Activated CD4-positive, alpha-beta T cell treated with anti-CD3 and anti-CD28 coated beads, Interleukin-2, amount 10 ng/mL, durations not matched to agents 24 days and 14 days (primary cell): ENCODE measurements at regions of chr1 and their contacts with region 1.

Region 1: GRCh38 chr1:160519642-160520435 is 3.2 kb downstream of the SLAMF6 start:
- DNase-seq: peak; percentile 76
- H3K4me3 Mint-ChIP-seq: peak overlapping the region; percentile 94
- H3K27ac Mint-ChIP-seq: peak overlapping the region; percentile 91
- H3K4me1 Mint-ChIP-seq: peaks cover 79% of the 10 kb centered on the region
- H3K27me3 Mint-ChIP-seq: no peaks in the 10 kb centered on the region

Region 2: DNA sequence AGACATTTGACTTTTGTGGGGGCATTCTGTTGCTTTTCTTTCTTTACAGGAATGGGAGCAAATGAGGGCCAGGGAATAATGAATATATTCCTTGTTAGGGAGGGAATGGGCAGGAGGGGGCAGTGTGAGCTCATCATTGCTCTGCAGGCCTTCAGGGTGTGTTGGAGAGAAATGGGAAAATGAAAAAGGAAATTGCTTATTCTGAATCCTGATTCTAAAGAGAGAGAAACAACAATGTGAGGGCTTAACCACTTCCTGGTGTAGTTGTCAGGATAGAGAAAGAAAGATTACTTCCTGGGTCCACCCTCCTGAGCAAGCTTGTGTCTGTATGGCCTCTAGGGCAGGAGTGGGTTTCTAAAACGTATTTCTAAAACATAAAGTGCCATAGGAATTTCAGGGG is 91.2 kb before region 1 on chr1:
- intact Hi-C with region 1: loop called (anchors 1 kb)
- DNase-seq: peak; percentile 79
- H3K4me3 Mint-ChIP-seq: peak overlapping the region; percentile 39
- H3K27ac Mint-ChIP-seq: peak overlapping the region; percentile 85
- H3K4me1 Mint-ChIP-seq: peaks cover 52% of the 10 kb centered on the region
- H3K27me3 Mint-ChIP-seq: no peaks in the 10 kb centered on the region

Region 3: DNA sequence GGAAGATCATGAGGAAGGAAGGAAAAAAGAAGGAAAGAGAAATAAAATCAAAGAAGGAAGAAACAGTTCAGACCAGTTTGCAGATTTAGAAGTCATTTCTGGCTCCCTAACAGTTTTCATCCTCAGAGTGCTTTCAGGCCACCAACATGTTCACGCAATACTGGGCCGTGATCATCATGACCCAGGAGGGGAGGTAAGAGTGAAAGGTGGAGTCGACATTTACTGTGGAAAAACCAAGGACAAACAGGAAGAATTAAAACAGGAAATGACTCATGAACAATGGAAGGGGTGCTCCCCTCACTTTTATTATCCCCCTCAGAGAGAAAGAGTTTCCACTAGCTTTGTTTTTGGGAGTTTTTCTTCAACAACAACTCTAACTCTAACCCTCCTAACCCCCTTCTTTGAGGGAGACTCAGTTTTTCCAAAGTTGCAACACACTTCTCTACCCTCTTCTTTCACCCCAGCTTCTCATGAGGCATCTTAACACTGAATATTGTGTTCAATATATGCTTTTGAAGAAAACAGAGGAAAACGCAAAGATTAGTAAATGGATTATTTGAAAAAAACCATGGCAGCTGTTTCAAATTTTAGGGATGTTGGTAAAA is 59.1 kb before region 1 on chr1:
- intact Hi-C with region 1: loop called (anchors 1 kb)
- DNase-seq: peak; percentile 72
- H3K4me3 Mint-ChIP-seq: peak overlapping the region; percentile 77
- H3K27ac Mint-ChIP-seq: peak overlapping the region; percentile 98
- H3K4me1 Mint-ChIP-seq: peaks cover 74% of the 10 kb centered on the region
- H3K27me3 Mint-ChIP-seq: no peaks in the 10 kb centered on the region

Region 4: GRCh38 chr1:160496334-160496733 is 23.5 kb before region 1 on chr1:
- intact Hi-C with region 1: loop called (anchors 2 kb)
- DNase-seq: no peak
- H3K4me3 Mint-ChIP-seq: no peak overlapping the region
- H3K27ac Mint-ChIP-seq: peak overlapping the region; percentile 55
- H3K4me1 Mint-ChIP-seq: peaks cover 33% of the 10 kb centered on the region
- H3K27me3 Mint-ChIP-seq: no peaks in the 10 kb centered on the region

Region 5: DNA sequence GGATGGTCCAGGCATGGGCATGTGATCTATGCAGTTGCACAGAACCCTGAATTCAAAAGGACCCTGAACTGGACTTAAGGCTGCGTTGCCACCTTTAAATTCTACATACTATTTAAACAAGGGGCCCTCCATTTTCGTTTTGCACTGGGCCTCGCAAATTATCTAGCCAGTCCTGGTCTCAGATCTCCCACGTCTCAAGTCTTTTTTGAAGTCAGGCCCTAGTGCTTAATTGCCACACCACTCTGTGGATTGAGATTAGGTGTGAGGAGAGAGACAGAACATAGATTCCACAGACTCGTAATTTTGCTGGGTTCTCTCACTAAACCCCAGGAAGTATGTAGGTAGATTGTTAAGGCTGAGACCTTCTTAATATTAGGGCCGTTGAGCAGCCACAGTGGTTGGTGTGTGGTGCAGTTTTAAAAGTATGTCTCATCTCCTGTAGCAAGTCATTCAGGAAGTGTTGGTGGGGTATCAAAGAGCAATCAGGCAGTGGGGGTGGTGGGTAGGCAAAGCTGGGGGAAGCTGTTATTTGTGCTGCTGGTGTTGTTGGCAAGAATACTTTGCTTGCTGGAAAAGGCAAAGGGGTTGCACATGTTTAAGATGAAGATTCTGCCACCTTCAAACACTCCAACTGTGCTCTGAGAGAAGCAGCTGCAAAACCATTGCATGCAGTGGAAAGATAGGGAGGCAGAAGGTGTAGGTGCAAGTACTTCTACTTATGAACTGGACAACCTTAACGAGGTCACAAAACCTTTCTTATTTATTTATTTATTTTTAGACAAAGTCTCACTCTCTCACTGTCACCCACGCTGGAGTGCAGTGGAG is 48.2 kb after region 1 on chr1:
- intact Hi-C with region 1: loop called (anchors 1 kb)
- DNase-seq: peak; percentile 85
- H3K4me3 Mint-ChIP-seq: peak overlapping the region; percentile 68
- H3K27ac Mint-ChIP-seq: peak overlapping the region; percentile 98
- H3K4me1 Mint-ChIP-seq: peaks cover 76% of the 10 kb centered on the region
- H3K27me3 Mint-ChIP-seq: no peaks in the 10 kb centered on the region

Region 6: DNA sequence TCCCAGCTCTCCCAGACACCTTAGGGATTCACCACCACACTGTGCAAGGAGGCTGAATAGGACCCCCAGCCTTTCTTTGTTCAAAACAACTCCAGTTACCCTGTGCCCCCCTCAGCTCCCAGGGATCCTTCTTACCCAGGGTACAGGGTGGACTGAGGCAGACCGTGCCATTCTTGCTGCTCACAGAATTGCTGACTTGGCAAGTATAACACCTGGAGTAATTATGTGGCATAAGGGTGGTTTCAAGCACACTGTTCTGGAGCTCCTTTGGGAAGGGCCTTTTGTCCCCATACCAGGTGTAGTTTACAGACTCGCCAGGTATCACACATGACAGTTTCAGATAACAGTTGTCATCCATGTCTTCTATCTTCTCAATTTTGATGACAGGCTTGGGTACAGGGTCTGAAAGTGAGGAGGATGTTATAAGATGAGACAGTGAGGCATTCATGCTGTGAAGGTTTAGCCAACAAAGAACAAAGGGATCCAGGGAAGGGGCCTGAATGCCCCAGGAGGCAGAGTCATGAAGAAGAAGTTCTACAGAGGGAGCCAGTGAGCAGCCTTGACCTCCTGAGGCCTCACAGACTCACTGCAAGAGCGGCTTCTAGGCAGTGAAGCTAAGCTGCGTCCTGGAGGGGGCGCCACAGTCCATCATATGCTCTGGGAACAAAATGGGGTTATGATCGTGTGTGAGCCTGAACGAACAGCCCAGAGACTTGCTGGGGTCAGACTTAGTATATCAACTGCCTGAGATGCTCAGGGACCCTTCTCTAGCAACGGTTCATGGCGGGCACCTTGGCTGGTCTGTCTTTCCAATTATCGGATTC is 161.4 kb after region 1 on chr1:
- intact Hi-C with region 1: no loop called
- DNase-seq: peak; percentile 95
- H3K4me3 Mint-ChIP-seq: no peak overlapping the region
- H3K27ac Mint-ChIP-seq: peak overlapping the region; percentile 77
- H3K4me1 Mint-ChIP-seq: peaks cover 82% of the 10 kb centered on the region
- H3K27me3 Mint-ChIP-seq: no peaks in the 10 kb centered on the region

Region 7: DNA sequence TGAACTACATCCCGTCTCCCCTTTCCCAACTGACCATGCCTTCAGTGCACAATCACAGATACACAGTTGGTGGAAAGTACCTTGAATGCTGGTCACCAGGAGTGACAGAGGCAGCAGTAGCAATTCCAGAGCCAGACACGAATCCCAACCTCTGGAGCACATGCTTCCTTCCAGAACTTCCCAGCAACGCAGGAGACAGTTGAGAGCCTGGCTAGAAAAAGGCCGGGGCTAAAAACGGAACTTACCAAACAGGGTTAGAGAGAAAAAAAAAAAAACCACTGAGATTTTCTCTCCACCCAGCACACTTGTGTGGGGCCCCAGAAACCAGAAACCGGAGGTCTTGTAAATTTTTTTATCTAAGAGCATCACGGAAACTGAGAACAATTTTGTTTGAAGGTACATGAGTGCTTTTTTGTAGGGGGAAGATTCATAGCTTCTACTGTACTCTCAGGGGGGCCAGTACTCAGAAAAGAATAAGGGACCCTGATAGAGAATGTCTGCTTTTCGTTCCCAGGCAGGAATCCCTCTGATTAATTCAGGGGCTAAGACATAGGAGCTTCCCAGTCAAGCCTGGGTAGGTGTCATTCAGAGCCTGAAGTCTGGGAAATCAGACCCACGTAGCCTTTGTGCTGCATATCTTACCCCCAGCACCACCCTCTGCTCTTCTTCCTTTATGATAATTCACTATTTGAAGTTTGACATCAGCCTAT is 191.9 kb after region 1 on chr1 and contains the start of gene CD48:
- intact Hi-C with region 1: loop called (anchors 5 kb)
- DNase-seq: peak; percentile 85
- H3K4me3 Mint-ChIP-seq: no peak within 1 kb of the TSS
- H3K27ac Mint-ChIP-seq: no peak within 1 kb of the TSS
- H3K4me1 Mint-ChIP-seq: peaks cover 26% of the 10 kb centered on the region
- H3K27me3 Mint-ChIP-seq: no peaks in the 10 kb centered on the region
- total RNA-seq, gene CD48: 206 and 208 TPM in 2 replicates